AG04449 (cell line): ENCODE measurements at regions of chr6 and their contacts with region 1.

Region 1: GRCh38 chr6:155314092-155314772 is at the start of gene TFB1M:
- DNase-seq: peak; percentile 89
- H3K4me3 ChIP-seq: peak within 1 kb of the TSS; percentile 88
- CTCF ChIP-seq: no peak

Region 2: GRCh38 chr6:154928325-154928922 is 385.8 kb before region 1 on chr6:
- CTCF ChIA-PET with region 1: interaction called, 32 read pairs
- POLR2A ChIA-PET with region 1: no interaction called
- DNase-seq: no peak
- H3K4me3 ChIP-seq: no peak overlapping the region
- CTCF ChIP-seq: peak; percentile 53

Region 3: DNA sequence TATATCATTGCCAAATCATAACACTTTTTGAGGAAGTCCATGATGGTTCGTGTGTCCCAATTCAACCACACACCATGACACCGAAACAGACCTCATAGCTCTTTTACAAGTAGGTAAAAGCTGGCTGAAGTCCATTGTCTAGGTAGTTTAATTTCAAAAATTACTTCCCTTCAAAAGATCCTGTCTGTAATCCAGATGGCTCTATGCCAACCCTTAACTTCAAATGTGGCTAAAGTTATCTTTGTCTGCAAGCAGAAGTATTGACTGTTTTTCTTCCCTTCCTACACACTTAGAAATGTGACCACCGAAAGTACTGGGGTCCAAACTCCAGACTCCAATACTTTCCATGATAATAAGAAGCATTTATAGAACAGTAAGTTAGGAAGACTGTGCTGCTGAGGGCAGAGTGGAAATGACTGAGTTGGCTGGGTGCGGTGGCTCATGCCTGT is 327.4 kb before region 1 on chr6:
- CTCF ChIA-PET with region 1: no interaction called
- POLR2A ChIA-PET with region 1: no interaction called
- DNase-seq: no peak
- H3K4me3 ChIP-seq: no peak overlapping the region
- CTCF ChIP-seq: no peak

Region 4: GRCh38 chr6:155130161-155130853 is 183.9 kb before region 1 on chr6:
- CTCF ChIA-PET with region 1: no interaction called
- POLR2A ChIA-PET with region 1: no interaction called
- DNase-seq: no peak
- H3K4me3 ChIP-seq: no peak overlapping the region
- CTCF ChIP-seq: no peak

Region 5: DNA sequence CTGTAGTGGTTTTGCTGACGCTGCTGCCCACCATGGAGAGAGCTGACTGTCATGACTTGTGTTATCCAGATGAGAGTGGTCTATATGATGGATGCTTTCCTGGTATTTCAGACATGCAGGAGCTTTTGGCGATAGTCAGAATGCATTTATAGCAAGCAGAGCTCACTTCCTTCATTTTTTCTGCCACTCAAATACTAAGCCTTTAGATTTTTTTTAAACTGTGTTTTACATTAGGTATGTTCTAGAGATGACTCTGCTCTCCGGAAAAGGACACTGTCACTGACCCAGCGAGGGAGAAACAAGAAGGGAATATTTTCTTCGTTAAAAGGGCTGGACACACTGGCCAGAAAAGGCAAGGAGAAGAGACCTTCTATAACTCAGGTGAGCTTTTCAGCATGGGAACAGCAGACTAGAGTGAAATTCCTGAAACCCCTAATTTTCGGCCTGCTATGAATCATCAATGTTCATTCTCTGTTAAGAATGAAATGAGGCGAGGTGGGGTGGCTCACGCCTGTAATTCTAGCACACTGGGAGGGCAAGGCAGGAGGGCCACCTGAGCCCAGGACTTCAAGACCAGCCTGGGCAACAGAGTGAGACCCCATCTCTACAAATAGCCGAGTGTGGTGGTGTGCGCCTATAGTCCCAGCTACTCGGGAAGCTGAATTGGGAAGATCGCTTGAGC is 149.1 kb before region 1 on chr6:
- CTCF ChIA-PET with region 1: no interaction called
- POLR2A ChIA-PET with region 1: no interaction called
- DNase-seq: no peak
- H3K4me3 ChIP-seq: no peak overlapping the region
- CTCF ChIP-seq: no peak

Region 6: DNA sequence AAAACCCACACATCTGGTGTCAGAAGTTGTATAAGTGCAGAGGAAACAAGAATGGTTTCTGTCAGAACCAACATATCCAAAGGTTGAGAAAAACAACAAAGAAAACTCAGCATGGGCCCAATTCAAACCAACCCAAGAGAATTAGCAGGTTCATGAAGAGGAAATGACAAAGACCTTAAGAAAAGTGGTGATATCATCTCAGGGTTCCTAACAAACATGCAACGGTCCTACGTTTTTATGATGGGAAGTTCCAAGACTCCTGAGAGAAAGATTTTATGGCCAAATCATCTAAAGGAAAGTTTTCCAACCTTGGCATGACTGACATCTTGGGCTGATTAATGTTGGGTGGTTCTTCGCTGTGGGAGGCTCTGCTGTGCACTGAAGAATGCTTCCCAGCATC is 22.9 kb before region 1 on chr6:
- CTCF ChIA-PET with region 1: no interaction called
- POLR2A ChIA-PET with region 1: no interaction called
- DNase-seq: no peak
- H3K4me3 ChIP-seq: no peak overlapping the region
- CTCF ChIP-seq: no peak

Region 7: DNA sequence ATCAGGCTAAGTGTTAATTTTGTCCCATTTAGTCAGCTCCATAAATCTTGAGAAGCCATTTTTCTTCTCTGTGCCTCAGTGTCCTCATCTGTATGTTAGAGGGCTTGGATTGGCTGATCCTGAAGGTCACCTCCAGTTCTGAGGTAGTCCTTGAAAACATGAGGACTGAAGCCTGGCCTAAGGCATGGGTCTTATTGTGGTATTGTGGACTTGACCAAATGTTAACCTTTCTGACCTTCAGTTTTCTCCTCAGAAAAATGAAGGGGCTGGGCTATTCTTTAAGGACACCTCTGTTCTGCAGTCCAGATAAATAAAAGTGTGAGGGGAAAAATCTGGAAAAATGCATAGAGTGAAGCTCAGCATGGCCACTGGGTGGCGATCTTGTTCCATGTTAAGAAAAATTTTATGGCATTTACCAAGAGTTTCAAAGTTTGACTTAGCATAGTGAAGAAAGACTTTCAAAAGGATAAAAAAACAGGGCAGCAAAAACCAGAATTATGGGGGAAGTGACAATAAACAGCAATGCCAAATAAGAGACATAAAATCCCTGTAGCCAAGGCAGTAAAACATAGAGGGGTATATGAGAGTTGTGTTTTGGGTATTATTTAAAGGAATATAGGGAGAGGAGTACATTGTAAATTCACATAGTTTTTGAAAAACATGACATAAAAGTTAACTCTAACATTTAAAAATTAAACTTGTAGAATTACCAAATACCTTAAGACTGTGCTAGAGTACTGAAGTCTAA is 13.3 kb after region 1 on chr6:
- CTCF ChIA-PET with region 1: interaction called, 31 read pairs
- POLR2A ChIA-PET with region 1: no interaction called
- DNase-seq: peak; percentile 36
- H3K4me3 ChIP-seq: no peak overlapping the region
- CTCF ChIP-seq: peak; percentile 61